ENCODE measurements at regions of chr3 and their contacts with region 1.

Region 1: GRCh38 chr3:62558549-62559112 is 185.3 kb upstream of the FEZF2 start:
- DNase-seq: peak; percentile 7
- ATAC-seq: peak; percentile 77
- H3K4me3 ChIP-seq: no peak overlapping the region
- H3K27ac ChIP-seq: no peak overlapping the region
- H3K4me1 ChIP-seq: no peaks in the 10 kb centered on the region
- H3K27me3 ChIP-seq: no peaks in the 10 kb centered on the region
- CTCF ChIP-seq: peak; percentile 49
- EP300 ChIP-seq: no peak
- POLR2A ChIP-seq: no peak
- RAD21 ChIP-seq: no peak

Region 2: GRCh38 chr3:60622349-60622748 is 1936.3 kb before region 1 on chr3:
- CTCF ChIA-PET with region 1: no interaction called
- POLR2A ChIA-PET with region 1: no interaction called
- in situ Hi-C with region 1: no loop called
- intact Hi-C with region 1: no loop called
- DNase-seq: no peak
- ATAC-seq: no peak
- H3K4me3 ChIP-seq: no peak overlapping the region
- H3K27ac ChIP-seq: no peak overlapping the region
- H3K4me1 ChIP-seq: no peaks in the 10 kb centered on the region
- H3K27me3 ChIP-seq: no peaks in the 10 kb centered on the region
- CTCF ChIP-seq: no peak
- EP300 ChIP-seq: no peak
- POLR2A ChIP-seq: no peak
- RAD21 ChIP-seq: no peak

Region 3: GRCh38 chr3:62201438-62202035 is 357.1 kb before region 1 on chr3:
- CTCF ChIA-PET with region 1: no interaction called
- POLR2A ChIA-PET with region 1: no interaction called
- in situ Hi-C with region 1: loop called (anchors 10 kb)
- intact Hi-C with region 1: loop called (anchors 5 kb)
- DNase-seq: peak; percentile 15
- ATAC-seq: peak; percentile 65; the same call in 1 of the 3 replicates
- H3K4me3 ChIP-seq: no peak overlapping the region
- H3K27ac ChIP-seq: no peak overlapping the region
- H3K4me1 ChIP-seq: peaks cover 8% of the 10 kb centered on the region
- H3K27me3 ChIP-seq: no peaks in the 10 kb centered on the region
- CTCF ChIP-seq: peak; percentile 56
- EP300 ChIP-seq: no peak
- POLR2A ChIP-seq: no peak
- RAD21 ChIP-seq: no peak

Region 4: DNA sequence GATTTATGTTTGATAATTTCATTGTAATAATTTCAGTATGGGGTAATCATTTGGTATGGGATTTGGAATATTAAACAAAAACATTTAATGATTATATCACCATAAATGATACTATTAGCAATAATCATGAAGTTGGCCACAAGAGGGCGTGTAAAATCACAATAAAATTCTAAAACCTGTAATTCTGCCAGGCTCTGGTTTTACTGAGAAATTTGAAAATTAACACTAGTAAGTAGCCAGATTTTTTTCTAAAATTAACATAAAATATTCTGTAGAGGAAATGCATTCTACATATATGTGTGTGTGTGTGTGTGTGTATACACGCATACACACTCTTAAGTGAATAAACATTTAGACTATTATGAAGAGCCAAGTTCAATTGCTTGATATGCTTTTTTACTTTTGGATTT is 225.8 kb before region 1 on chr3:
- CTCF ChIA-PET with region 1: interaction called, 18 read pairs
- POLR2A ChIA-PET with region 1: no interaction called
- in situ Hi-C with region 1: loop called (anchors 5 kb)
- intact Hi-C with region 1: loop called (anchors 1 kb)
- DNase-seq: no peak
- ATAC-seq: no peak
- H3K4me3 ChIP-seq: no peak overlapping the region
- H3K27ac ChIP-seq: no peak overlapping the region
- H3K4me1 ChIP-seq: no peaks in the 10 kb centered on the region
- H3K27me3 ChIP-seq: no peaks in the 10 kb centered on the region
- CTCF ChIP-seq: peak; percentile 22; the same call in 1 of the 2 replicates
- EP300 ChIP-seq: no peak
- POLR2A ChIP-seq: no peak
- RAD21 ChIP-seq: no peak

Region 5: DNA sequence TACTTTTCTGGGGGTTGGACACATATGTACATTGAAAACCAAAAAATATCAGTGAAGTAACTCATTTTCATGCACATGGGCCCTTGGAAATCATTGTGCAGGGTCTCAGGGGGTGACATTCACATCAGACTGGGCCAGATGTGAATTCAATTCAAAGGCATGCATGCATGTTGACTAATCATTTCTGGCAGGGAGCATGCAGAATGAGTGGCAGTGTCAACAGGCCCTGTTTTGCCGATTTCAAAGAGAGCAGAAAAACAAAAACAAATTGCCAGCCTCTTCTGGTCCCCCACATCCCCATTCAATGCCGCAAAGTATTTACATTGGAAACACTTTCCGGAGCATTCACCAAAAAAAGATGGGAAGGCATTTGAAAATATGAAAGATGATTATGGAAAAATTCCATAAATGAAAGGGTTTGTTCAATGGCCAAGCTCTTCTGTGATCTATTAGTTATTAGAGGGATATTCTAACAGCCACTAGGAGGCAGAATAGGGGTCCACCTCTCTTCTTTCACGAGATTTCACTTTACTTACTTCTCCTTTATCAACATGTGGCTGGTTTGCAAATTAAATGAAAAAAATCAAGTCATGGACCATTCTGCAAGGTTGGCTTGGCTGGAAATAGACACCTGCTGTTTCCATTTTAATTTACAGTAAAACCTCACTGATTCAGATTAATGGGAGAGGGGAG is 65.4 kb before region 1 on chr3:
- CTCF ChIA-PET with region 1: no interaction called
- POLR2A ChIA-PET with region 1: no interaction called
- in situ Hi-C with region 1: no loop called
- intact Hi-C with region 1: loop called (anchors 2 kb)
- DNase-seq: no peak
- ATAC-seq: no peak
- H3K4me3 ChIP-seq: no peak overlapping the region
- H3K27ac ChIP-seq: no peak overlapping the region
- H3K4me1 ChIP-seq: no peaks in the 10 kb centered on the region
- H3K27me3 ChIP-seq: no peaks in the 10 kb centered on the region; a peak in 3 of 5 replicates
- CTCF ChIP-seq: no peak
- EP300 ChIP-seq: no peak
- POLR2A ChIP-seq: no peak
- RAD21 ChIP-seq: no peak